ENCODE measurements at regions of chr19 and their contacts with region 1.

Region 1: DNA sequence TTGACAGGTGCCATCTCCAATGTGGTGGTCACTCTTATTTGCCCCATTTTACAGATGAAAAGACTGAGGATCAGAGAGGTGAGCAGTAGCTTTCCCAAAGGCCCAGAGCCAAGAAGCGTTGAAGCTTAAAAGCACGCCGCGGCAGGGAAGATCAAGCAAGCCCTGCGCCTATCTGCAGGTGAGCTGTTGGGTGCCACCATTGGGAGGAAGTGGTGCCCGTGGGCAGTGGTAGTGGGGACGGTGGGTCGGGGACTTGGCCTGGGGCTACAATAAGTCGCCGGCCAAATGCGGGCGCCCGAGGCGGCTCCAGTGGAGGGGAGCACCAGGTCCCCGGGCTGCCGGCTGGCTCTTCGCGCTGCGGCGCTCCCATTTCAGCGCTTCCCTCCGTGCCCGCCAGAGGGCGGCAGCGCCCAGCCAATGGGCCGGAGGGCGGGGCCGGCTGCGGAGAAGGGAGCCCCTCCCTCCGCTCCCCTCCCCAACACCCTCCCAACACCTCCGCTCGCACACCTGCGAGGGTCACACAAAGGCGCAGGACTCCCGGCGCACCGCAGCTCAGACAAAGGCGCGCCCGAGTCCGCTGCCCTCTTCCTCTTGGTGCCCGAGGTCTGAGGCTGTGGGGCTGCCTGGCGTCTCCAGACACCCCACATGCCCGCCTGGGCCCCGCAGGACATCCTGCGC is 744 bp upstream of the POU2F2 start:
- DNase-seq: peak; percentile 69 to 90
- ATAC-seq: peak; percentile 89
- H3K4me3 ChIP-seq: no peak overlapping the region
- H3K27ac ChIP-seq: no peak overlapping the region
- H3K4me1 ChIP-seq: no peaks in the 10 kb centered on the region
- H3K27me3 ChIP-seq: no peaks in the 10 kb centered on the region

Region 2: DNA sequence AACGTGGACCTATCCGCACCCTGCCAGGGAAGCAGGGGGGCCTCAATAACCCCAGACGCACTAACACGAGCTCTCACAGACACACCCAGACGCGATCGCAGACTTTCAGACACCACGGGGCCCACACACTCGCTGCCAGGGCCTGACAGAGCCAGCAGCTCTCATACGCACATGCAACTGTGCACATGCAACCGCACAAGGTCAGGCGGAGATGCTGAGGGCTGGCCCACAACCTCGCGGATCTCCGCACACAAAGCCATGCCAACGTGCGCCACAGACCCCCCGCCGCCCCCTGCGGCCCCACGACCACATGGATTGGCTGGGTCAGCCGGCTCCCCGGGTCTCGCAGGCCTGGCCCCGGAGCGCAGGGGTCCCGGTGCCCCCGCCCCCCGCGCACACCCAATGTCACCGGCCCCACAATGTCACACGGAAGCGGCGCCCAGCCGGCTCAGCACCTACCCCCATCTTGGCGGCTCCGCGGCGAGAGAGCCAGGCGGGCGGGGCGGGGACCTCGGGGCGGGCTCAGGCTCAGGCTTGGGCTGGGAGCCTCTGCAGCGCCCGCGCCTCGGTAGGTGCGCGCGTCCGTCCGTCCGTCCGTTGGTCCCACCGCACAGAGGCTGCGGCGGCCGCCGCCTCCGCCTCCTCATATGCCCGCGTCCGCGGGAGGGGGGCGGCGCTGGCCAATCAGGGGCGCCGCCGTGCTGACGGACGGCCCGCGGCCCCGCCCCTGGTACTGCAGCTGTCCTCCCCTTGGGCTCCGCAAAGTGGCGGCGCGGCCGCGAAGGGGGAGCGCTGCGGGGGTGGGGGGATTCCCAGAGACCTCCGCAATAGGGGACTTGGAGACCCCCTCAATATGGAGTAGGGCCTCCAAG is 139.1 kb before region 1 on chr19 and contains the start of gene ATP1A3:
- intact Hi-C with region 1: no loop called
- DNase-seq: no peak
- ATAC-seq: no peak
- H3K4me3 ChIP-seq: no peak within 1 kb of the TSS
- H3K27ac ChIP-seq: no peak within 1 kb of the TSS
- H3K4me1 ChIP-seq: no peaks in the 10 kb centered on the region
- H3K27me3 ChIP-seq: peaks cover 0 to 2% of the 10 kb centered on the region in 2 donors
- total RNA-seq, gene ATP1A3: not detected

Region 3: DNA sequence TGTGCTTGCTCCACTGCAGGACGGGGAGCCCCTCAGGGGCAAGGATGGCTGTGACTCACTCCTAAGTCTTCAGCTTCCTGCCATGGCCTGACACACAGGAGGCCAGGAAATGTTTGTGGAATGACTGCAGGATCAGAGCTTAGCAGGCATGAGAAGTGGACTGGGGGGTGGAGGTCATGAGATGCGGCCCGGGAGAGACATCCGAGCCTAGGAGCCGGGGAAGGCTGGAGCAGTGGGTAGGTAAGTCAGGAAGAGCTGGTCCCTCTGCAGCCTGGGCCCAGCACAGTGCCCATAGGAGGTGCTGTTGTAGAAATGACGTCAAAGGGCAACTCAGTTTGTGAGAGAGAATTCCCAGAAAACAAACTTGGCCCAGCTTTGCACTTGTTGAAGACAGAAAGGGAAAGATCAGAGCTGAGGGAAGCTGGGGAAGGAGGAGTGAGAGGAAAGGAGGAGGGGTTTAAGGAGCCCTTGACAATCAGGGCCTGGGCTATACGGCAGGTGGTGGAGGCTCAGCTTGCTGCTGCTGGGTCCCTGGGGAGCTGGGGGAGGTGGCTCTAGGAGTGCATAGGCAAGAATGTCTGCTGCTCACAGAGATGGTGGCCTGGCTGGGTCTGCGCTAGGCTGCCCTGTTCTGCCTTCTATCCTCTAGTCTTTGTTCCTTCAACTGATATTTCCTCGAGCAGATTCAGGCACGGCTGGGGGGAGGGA is 19.2 kb before region 1 on chr19:
- intact Hi-C with region 1: loop called in 1 of 2 experiments (anchors 2 kb)
- DNase-seq: peak; percentile 76 to 81
- ATAC-seq: peak; percentile 72
- H3K4me3 ChIP-seq: no peak overlapping the region
- H3K27ac ChIP-seq: peak overlapping the region in 1 of 2 donors; percentile 1
- H3K4me1 ChIP-seq: no peaks in the 10 kb centered on the region
- H3K27me3 ChIP-seq: no peaks in the 10 kb centered on the region

Region 4: DNA sequence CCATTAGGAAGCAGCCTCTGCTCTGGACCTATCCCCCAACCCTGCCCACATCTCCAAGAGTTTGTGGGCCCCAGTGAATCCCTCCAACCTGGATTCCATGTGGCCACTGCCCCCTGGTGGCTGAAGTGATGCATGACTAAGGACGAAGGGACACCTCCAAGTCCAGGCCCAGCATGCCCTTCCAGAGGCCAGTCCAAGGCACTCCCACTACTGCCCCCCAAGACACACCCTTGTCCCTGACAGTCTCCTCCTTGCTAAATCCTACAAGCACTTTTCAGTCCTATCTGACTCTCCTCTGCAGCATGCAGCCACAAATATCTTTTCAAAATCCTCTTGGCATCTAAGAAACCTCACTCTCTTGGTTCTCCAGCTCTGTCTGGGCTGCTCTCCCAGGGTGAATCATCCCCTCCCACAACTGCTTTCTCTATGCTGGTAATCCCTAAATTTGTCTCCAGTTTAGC is 51.4 kb after region 1 on chr19:
- intact Hi-C with region 1: loop called (anchors 2 to 5 kb)
- DNase-seq: peak; percentile 85 to 90
- ATAC-seq: peak; percentile 88
- H3K4me3 ChIP-seq: no peak overlapping the region
- H3K27ac ChIP-seq: no peak overlapping the region
- H3K4me1 ChIP-seq: no peaks in the 10 kb centered on the region
- H3K27me3 ChIP-seq: no peaks in the 10 kb centered on the region

Region 5: GRCh38 chr19:42325273-42325895 is 192.4 kb after region 1 on chr19 and contains the start of gene MEGF8:
- intact Hi-C with region 1: loop called (anchors 5 kb)
- DNase-seq: peak; percentile 99
- ATAC-seq: peak; percentile 98
- H3K4me3 ChIP-seq: peak within 1 kb of the TSS; percentile 67 to 69
- H3K27ac ChIP-seq: no peak within 1 kb of the TSS
- H3K4me1 ChIP-seq: no peaks in the 10 kb centered on the region
- H3K27me3 ChIP-seq: no peaks in the 10 kb centered on the region
- total RNA-seq, gene MEGF8: 17.5 to 26.4 TPM

Region 6: DNA sequence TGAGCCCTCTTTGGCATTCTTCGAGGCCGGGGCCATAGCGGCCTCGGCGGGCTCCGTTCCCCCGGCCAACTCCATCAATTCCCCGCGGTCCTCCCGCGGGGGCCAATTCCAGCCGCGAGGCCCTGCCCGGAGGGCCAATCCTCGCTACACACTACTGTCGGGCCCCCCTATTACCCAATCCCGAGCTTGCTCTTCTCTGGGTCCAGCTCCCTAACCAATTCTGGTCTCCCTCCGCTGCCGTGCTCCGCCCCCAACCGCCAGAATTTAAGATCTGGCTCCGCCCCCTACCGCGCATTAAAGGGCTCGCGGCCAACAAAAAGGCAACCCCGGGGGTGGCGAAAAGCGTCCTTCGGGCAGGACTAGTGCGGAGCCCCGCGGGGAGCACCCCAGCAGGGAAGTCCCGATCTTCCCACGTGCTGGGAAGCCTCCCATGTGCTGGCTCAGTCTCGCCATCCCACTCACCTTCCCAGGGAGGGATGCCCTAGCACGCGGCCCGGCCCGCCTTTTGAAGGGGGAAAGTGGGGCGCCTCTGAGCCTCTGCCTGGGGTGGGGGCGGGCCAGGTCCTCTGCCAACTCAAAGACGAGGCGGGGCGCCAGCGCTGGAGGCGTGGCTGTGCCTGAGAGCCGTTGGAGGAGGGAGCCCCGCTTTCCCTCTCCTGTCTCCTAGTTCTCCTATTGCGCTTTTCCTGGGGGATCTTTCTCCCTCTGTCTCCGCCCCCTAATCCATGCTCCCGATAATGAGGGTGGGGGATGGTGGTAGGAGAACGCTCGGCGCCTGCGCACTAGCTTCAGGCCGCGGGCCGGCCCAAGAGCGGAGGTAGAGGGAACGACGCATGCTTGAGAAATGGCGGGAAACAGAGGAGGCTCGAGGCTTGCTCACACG is 290.7 kb after region 1 on chr19:
- intact Hi-C with region 1: loop called in 1 of 2 experiments (anchors 10 kb)
- DNase-seq: peak; percentile 90 to 93
- ATAC-seq: peak; percentile 95
- H3K4me3 ChIP-seq: peak overlapping the region; percentile 23 to 33
- H3K27ac ChIP-seq: no peak overlapping the region
- H3K4me1 ChIP-seq: no peaks in the 10 kb centered on the region
- H3K27me3 ChIP-seq: peaks cover 0 to 1% of the 10 kb centered on the region in 2 donors